A549 (cell line): ENCODE measurements at regions of chr10 and their contacts with region 1.

Region 1: DNA sequence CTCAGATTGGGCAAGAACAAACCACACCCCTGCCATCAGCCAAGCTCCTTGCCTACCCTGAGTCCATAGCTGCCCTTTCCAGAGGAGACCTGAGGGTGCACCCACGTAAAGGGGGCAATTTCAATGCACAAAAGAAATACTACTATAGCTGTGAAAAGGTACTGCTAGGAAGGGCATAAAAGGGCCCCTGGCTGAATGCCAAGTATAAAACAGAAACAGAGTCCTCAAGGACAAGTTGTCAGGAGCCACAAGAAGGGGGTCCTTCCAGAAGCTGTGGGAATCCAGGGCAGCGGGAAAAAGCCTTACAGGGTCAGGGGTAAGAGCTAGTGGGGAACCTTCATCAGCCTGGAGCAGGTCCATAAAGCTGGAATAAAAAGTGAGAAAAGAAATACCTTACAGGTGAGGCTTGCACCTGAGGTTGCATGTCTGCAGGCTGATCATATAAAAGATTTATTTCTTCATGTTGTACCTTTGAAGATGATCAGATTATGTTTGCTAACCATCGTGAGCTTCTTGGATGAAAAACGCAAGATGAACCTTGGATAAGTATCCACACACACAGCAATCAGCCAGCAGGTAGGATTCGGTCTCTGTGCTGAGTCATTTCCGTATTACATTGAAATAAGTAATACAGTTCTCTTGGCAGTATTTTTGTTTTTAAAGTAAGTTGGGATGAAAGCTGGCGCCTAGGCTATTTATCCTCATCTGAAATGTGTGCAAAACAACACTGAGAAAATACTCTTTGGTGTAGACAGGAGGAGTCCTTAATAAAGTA is 108.8 kb upstream of the PRKCQ start:
- DNase-seq: no peak
- ATAC-seq: no peak
- H3K4me3 ChIP-seq: no peak overlapping the region
- H3K27ac ChIP-seq: no peak overlapping the region
- H3K4me1 ChIP-seq: no peaks in the 10 kb centered on the region
- CTCF ChIP-seq: no peak
- EP300 ChIP-seq: no peak
- POLR2A ChIP-seq: no peak
- RAD21 ChIP-seq: no peak

Region 2: DNA sequence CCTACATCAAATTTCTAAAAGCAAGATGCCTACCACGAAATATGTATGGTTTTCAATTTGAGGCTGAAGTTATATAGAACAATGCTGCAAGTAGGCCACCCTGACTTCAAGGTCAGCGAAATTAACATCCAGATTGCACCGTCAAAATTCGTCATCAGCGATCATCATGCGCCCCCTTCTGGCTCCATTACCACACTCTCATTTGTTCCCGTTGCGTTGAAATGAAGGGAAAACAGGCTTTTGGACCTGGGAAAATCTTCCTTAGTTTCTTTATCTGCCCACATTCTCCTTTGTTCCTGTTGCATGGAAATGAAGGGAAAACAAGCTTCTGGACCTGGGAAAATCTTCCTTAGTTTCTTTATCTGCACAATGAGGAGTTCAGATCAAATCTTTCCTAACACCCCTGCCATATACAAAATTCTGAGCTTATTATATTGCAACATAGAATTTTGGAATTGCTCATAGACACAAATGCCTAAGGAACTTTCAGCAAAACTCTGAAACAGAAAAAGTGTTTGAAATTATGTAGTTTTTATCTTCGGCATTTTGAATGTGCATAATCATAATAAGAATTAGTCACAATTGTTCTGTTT is 10.5 kb before region 1 on chr10:
- CTCF ChIA-PET with region 1: interaction called, 23 read pairs
- POLR2A ChIA-PET with region 1: no interaction called
- DNase-seq: peak; percentile 44 to 63
- ATAC-seq: peak; percentile 70 to 80; a peak in 5 of 6 replicates
- H3K4me3 ChIP-seq: no peak overlapping the region
- H3K27ac ChIP-seq: no peak overlapping the region
- H3K4me1 ChIP-seq: no peaks in the 10 kb centered on the region
- CTCF ChIP-seq: peak; percentile 77
- EP300 ChIP-seq: no peak
- POLR2A ChIP-seq: no peak
- RAD21 ChIP-seq: peak; percentile 70 to 76

Region 3: DNA sequence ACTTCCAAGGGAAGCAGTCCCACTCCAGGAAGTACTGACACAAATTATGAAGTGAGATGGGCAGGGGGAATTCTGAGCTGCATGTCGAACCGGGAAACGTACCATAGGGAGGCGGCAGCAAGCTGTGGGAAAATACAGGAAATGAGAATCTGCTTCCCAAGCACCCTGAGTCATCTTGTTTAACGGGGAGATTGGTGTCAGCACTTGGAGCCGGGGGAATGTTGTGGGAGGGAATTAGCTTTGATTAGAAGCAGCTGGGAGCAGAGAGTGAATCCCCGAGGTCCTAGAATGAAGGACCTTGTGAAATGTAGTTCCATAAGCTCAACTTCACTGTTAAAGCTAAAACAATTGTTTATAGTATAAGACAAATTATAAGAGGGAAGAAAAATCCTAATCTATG is 32.6 kb after region 1 on chr10:
- CTCF ChIA-PET with region 1: no interaction called
- POLR2A ChIA-PET with region 1: no interaction called
- DNase-seq: peak; percentile 69 to 87
- ATAC-seq: peak; percentile 87 to 89
- H3K4me3 ChIP-seq: peak overlapping the region; percentile 29; the same call in 2 of the 3 replicates
- H3K27ac ChIP-seq: peak overlapping the region; percentile 74 to 82
- H3K4me1 ChIP-seq: peaks cover 32% of the 10 kb centered on the region
- CTCF ChIP-seq: peak; percentile 37
- EP300 ChIP-seq: no peak
- POLR2A ChIP-seq: no peak
- RAD21 ChIP-seq: peak; percentile 62 to 67

Region 4: DNA sequence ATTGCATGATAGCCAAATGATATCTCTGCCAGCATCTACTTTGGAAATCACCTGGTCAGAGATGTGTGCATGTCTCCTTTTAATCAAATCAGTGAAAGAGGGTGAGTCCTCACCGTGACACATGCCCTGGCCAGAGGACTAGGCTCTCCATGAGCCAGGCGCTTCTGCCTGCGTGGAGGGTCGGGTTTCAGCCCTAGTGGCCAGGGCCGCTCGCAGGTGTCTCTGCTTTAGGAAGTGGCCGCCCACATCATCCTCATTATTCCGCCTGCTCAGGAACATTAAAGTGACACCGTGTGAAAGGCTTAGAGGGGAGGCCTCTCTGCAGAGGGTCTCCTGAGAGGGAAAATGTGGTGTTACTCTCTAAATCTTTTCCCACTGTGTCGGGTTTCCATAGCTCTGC is 64.8 kb after region 1 on chr10:
- CTCF ChIA-PET with region 1: no interaction called
- POLR2A ChIA-PET with region 1: no interaction called
- DNase-seq: no peak
- ATAC-seq: no peak
- H3K4me3 ChIP-seq: no peak overlapping the region
- H3K27ac ChIP-seq: no peak overlapping the region
- H3K4me1 ChIP-seq: peaks cover 20% of the 10 kb centered on the region; the same call in 2 of the 3 replicates
- CTCF ChIP-seq: no peak
- EP300 ChIP-seq: no peak
- POLR2A ChIP-seq: no peak
- RAD21 ChIP-seq: no peak

Region 5: GRCh38 chr10:6912424-6912823 is 223.6 kb after region 1 on chr10:
- CTCF ChIA-PET with region 1: no interaction called
- POLR2A ChIA-PET with region 1: no interaction called
- DNase-seq: peak in 1 of 2 experiments; percentile 48
- ATAC-seq: peak; percentile 74 to 75; a peak in 5 of 6 replicates
- H3K4me3 ChIP-seq: no peak overlapping the region
- H3K27ac ChIP-seq: peak overlapping the region in 1 of 2 experiments; percentile 31; a peak in 1 of 6 replicates
- H3K4me1 ChIP-seq: peaks cover 13% of the 10 kb centered on the region; the same call in 2 of the 3 replicates
- CTCF ChIP-seq: no peak
- EP300 ChIP-seq: peak; percentile 40 to 67; a peak in 3 of 5 replicates
- POLR2A ChIP-seq: no peak
- RAD21 ChIP-seq: no peak